ENCODE measurements at regions of chr5 and their contacts with region 1.

Region 1: GRCh38 chr5:172764849-172765765 is 5.9 kb downstream of the DUSP1 start:
- DNase-seq: peak; percentile 99
- ATAC-seq: peak; percentile 78
- H3K4me3 ChIP-seq: peak overlapping the region; percentile 54 to 73 (median 54); a peak in 5 of 6 replicates
- H3K27ac ChIP-seq: peak overlapping the region; percentile 84
- H3K4me1 ChIP-seq: peaks cover 55% of the 10 kb centered on the region
- H3K27me3 ChIP-seq: no peaks in the 10 kb centered on the region; a peak in 2 of 5 replicates
- CTCF ChIP-seq: peak; percentile 22; the same call in 1 of the 2 replicates
- EP300 ChIP-seq: peak; percentile 61 to 73; a peak in 2 of 4 replicates
- POLR2A ChIP-seq: peak in 1 of 2 experiments; percentile 64; a peak in 1 of 4 replicates
- RAD21 ChIP-seq: peak; percentile 45

Region 2: GRCh38 chr5:172733131-172733973 is 31.8 kb before region 1 on chr5:
- CTCF ChIA-PET with region 1: no interaction called
- POLR2A ChIA-PET with region 1: interaction called, 29 read pairs
- in situ Hi-C with region 1: loop called (anchors 5 kb)
- intact Hi-C with region 1: loop called (anchors 1 kb)
- DNase-seq: peak; percentile 51
- ATAC-seq: peak; percentile 71
- H3K4me3 ChIP-seq: peak overlapping the region; percentile 36 to 57 (median 37); a peak in 5 of 6 replicates
- H3K27ac ChIP-seq: peak overlapping the region; percentile 17
- H3K4me1 ChIP-seq: peaks cover 88% of the 10 kb centered on the region
- H3K27me3 ChIP-seq: peaks cover 0 to 15% of the 10 kb centered on the region in 2 experiments; a peak in 3 of 5 replicates
- CTCF ChIP-seq: no peak
- EP300 ChIP-seq: no peak
- POLR2A ChIP-seq: 0 out of 4 replicates have a peak, but pooled peaks of 1 of the 2 experiments have one; percentile 21
- RAD21 ChIP-seq: no peak

Region 3: GRCh38 chr5:172795318-172795977 is 30.3 kb after region 1 on chr5:
- CTCF ChIA-PET with region 1: no interaction called
- POLR2A ChIA-PET with region 1: interaction called, 425 read pairs
- in situ Hi-C with region 1: no loop called
- intact Hi-C with region 1: no loop called
- DNase-seq: no peak
- ATAC-seq: no peak
- H3K4me3 ChIP-seq: no peak overlapping the region
- H3K27ac ChIP-seq: no peak overlapping the region
- H3K4me1 ChIP-seq: peaks cover 97% of the 10 kb centered on the region
- H3K27me3 ChIP-seq: no peaks in the 10 kb centered on the region
- CTCF ChIP-seq: no peak
- EP300 ChIP-seq: no peak
- POLR2A ChIP-seq: no peak
- RAD21 ChIP-seq: no peak

Region 4: GRCh38 chr5:172833686-172834414 is 68.7 kb after region 1 on chr5 and contains the start of gene ERGIC1:
- CTCF ChIA-PET with region 1: no interaction called
- POLR2A ChIA-PET with region 1: interaction called, 50 read pairs
- in situ Hi-C with region 1: no loop called
- intact Hi-C with region 1: loop called (anchors 2 kb)
- DNase-seq: peak; percentile 64
- ATAC-seq: peak; percentile 84
- H3K4me3 ChIP-seq: peak within 1 kb of the TSS; percentile 83 to 95 (median 86)
- H3K27ac ChIP-seq: peak within 1 kb of the TSS; percentile 90
- H3K4me1 ChIP-seq: peaks cover 71% of the 10 kb centered on the region
- H3K27me3 ChIP-seq: no peaks in the 10 kb centered on the region; a peak in 1 of 5 replicates
- CTCF ChIP-seq: no peak
- EP300 ChIP-seq: 0 out of 4 replicates have a peak, but pooled peaks have one; percentile 28 to 30
- POLR2A ChIP-seq: peak; percentile 76 to 88
- RAD21 ChIP-seq: peak; percentile 44
- total RNA-seq, gene ERGIC1: 56.6 and 78.5 TPM in 2 replicates

Region 5: DNA sequence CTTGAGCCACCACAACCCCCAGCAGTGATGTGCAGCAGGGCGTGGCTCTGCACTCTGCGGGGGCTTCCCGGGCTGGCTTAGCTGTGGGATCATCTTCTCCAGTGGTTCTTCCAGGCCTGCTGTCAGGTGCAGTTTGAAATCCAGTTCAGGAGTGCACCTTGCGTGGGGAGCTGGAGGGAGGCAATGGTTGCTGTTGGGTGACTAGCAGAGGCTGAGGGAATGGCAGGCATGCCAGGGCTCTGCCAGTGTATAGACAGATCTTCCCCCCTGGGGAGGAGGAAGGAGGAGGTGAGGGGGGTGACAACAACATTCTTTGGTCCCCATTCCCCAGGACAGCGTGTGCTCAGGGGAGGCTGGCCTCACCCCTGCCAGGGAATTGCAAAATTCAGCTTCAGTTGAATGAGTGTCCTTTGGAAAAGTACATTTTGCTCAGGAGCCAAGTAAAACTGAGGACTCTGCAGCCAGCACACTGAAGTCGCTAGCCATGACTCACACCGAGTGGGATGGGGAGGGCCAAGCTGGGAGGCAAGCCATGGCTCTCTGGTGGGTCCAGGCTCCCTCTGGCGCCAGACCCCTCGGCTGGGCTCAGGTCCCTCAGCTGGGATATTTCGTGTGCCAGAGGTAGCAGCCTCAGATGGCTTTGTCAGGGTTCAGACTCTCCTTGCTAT is 104.0 kb after region 1 on chr5:
- CTCF ChIA-PET with region 1: no interaction called
- POLR2A ChIA-PET with region 1: no interaction called
- in situ Hi-C with region 1: no loop called
- intact Hi-C with region 1: no loop called
- DNase-seq: peak; percentile 64
- ATAC-seq: peak; percentile 71
- H3K4me3 ChIP-seq: peak overlapping the region in 1 of 3 experiments; percentile 14; a peak in 1 of 6 replicates
- H3K27ac ChIP-seq: peak overlapping the region; percentile 66
- H3K4me1 ChIP-seq: peaks cover 86% of the 10 kb centered on the region
- H3K27me3 ChIP-seq: no peaks in the 10 kb centered on the region
- CTCF ChIP-seq: peak; percentile 43
- EP300 ChIP-seq: no peak
- POLR2A ChIP-seq: no peak
- RAD21 ChIP-seq: no peak